Gastrocnemius medialis (tissue), 4 donors: ENCODE measurements at regions of chr1 and their contacts with region 1.

Region 1: DNA sequence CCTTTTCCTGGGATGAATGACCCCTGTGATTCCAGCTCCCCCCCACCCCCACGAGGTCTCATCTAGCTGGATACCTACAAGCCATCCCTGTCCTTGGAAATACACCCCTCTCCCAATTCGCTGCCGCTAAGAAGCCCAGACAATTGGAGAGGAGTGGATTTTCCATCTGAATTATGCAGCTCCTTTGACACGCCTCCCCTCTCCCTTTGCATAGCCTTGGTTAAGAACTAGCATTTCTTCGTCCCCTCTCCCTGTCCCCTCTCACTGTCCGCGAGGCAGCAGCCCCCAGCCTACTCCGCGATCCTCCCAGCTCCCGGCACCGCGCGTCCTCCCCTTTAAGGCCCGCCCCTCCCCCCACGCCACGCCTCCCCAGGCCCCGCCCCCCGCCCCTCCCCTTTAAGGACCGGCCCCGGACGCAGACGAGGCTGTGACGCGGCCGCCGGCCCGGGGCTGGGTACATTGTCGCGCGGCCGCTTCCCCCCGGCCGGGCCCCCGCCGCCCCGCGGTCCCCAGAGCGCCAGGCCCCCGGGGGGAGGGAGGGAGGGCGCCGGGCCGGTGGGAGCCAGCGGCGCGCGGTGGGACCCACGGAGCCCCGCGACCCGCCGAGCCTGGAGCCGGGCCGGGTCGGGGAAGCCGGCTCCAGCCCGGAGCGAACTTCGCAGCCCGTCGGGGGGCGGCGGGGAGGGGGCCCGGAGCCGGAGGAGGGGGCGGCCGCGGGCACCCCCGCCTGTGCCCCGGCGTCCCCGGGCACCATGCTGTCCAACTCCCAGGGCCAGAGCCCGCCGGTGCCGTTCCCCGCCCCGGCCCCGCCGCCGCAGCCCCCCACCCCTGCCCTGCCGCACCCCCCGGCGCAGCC is at the start of gene MAPKAPK2:
- DNase-seq: peak; percentile 73 to 76
- ATAC-seq: peak; percentile 65 to 72
- H3K4me3 ChIP-seq: peak within 1 kb of the TSS; percentile 66 to 79 (median 75)
- H3K27ac ChIP-seq: peak within 1 kb of the TSS; percentile 93 to 98 (median 96)
- H3K4me1 ChIP-seq: peaks cover 39 to 43% of the 10 kb centered on the region in 2 donors
- H3K27me3 ChIP-seq: no peaks in the 10 kb centered on the region
- CTCF ChIP-seq: no peak
- POLR2A ChIP-seq: peak; percentile 82 to 83
- total RNA-seq, gene MAPKAPK2: 115 to 207 (median 140) TPM

Region 2: GRCh38 chr1:206658264-206658980 is 26.3 kb before region 1 on chr1:
- in situ Hi-C with region 1: no loop called
- intact Hi-C with region 1: loop called (anchors 1 kb)
- DNase-seq: peak; percentile 43 to 82
- ATAC-seq: peak; percentile 46 to 77
- H3K4me3 ChIP-seq: peak overlapping the region; percentile 42 to 53 (median 44)
- H3K27ac ChIP-seq: peak overlapping the region; percentile 90 to 97 (median 94)
- H3K4me1 ChIP-seq: peaks cover 28 to 56% of the 10 kb centered on the region in 2 donors
- H3K27me3 ChIP-seq: no peaks in the 10 kb centered on the region
- CTCF ChIP-seq: peak; percentile 91 to 96 (median 95)
- POLR2A ChIP-seq: no peak

Region 3: GRCh38 chr1:206766251-206766856 is 81.6 kb after region 1 on chr1:
- in situ Hi-C with region 1: no loop called
- intact Hi-C with region 1: no loop called
- DNase-seq: peak; percentile 33 to 36
- ATAC-seq: peak in 1 of 2 donors; percentile 33
- H3K4me3 ChIP-seq: no peak overlapping the region
- H3K27ac ChIP-seq: no peak overlapping the region
- H3K4me1 ChIP-seq: no peaks in the 10 kb centered on the region
- H3K27me3 ChIP-seq: no peaks in the 10 kb centered on the region
- CTCF ChIP-seq: no peak
- POLR2A ChIP-seq: no peak

Region 4: DNA sequence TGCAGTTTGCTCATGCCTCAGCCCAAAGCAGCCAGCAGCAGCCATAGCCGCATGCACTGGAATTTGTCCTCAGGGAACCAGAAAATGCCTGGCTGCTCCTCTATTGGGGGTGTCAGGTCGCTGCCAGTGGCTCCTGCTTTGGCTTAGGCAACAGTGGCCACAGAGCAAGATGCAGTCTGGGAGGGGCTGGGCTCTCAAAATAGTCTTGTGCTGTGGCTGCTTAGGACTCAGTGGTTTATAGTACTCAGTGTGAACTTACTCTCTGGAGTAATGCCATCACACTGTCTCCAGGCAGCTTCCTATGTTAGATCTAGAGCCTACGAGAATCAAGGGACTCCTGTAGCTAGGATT is 661.8 kb after region 1 on chr1:
- in situ Hi-C with region 1: no loop called
- intact Hi-C with region 1: loop called (anchors 1 kb)
- DNase-seq: peak; percentile 90 to 94
- ATAC-seq: peak; percentile 98
- H3K4me3 ChIP-seq: peak overlapping the region in 1 of 4 donors; percentile 39
- H3K27ac ChIP-seq: peak overlapping the region; percentile 90 to 93 (median 90)
- H3K4me1 ChIP-seq: peaks cover 29 to 43% of the 10 kb centered on the region in 2 donors
- H3K27me3 ChIP-seq: no peaks in the 10 kb centered on the region
- CTCF ChIP-seq: no peak
- POLR2A ChIP-seq: peak in 1 of 2 donors; percentile 30